ENCODE measurements at regions of chr12 and their contacts with region 1.

Region 1: DNA sequence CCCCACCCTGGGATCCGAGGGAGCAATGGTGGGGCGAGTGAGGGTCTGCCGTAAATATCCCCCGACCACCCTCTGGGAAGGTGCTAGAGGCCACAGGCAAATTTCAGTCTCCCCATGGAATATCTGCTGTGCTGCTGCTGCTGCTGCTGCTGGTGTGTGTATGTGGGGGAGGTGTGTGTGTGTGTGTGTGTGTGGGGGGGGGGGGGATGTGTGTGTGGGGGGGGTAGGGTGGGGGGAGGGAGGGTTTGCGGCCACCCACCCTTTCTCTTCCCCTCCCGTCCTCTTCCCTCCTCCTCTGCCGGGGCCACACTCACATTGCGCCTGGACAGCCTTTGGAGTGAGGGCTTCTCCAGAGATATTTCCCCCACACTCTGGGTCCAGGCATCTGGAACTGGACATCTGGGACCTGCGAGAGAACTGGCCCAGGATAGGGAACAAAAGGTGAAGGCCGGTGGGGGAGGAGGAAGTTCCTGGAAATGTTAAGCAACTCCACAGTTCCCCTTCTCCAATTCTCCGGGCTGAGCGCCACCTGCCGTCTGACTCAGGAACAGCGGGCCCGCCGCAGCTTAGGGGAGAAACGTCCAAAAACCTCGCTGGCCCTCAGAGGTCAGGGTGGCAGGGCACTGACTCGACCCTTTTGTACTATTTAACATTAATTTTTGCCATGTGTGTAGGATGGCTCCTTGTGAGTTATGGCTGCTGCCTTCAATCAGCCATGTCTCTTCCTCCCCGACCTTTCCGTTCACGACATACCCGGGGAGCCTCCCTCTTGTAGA is at the start of gene C1RL:
- DNase-seq: peak; percentile 87 to 91
- ATAC-seq: peak; percentile 90 to 91
- H3K4me3 ChIP-seq: peak within 1 kb of the TSS; percentile 55 to 70 (median 64)
- H3K27ac ChIP-seq: peak within 1 kb of the TSS; percentile 88 to 92 (median 89)
- H3K4me1 ChIP-seq: peaks cover 18% of the 10 kb centered on the region in 2 donors
- H3K27me3 ChIP-seq: no peaks in the 10 kb centered on the region
- CTCF ChIP-seq: peak; percentile 96 to 99 (median 97)
- POLR2A ChIP-seq: peak in 1 of 2 donors; percentile 5
- total RNA-seq, gene C1RL: 15.0 to 18.7 (median 16.7) TPM

Region 2: DNA sequence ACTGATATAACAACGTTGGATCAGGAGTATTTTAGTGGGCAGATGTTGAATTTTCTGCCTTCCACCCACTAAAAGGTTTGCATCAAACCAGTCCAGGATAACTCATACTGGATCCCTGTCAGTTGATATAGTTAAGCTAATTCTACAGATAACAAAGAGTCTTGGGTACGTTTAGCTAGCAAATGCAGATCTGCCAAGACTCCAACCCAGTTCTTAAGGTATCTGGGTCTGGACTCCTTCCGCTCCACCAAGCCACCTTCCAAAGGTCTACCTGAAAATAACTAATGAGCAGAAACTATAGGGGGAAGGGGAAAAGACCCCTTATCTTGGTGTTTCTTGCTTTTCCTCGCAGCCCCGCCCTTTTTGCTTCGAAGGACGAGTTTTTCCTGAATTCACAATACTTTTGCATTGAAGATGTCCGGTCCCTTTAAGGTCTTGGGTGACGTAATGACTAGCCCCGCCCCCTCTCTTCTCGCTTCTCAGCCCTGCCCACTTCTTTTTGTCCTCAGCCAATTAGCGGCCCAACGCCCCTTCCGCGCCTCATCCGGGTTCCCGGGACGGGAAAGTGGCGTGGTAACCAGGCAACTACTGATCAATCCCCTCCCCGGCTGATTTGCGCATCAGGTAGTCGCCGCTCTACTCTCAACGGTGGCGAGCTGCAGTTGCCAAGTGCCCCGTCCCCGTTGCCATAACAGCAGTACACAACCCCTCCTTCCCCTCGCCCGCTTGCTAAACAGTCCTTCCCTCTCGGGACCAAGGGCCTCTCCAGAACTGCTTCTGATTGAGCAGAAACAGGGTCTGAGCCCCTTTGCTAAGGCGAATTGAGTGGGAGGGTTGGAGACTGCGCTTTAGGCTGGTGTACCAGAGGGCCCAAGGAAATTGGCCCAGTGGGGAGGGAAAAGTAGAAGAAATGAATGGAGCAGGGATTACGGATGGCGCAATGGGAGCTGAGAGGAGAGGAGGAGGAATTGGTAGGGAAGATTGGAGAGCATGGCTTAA is 204.4 kb before region 1 on chr12 and contains the start of gene LRRC23:
- in situ Hi-C with region 1: loop called in 1 of 4 experiments (anchors 25 kb)
- intact Hi-C with region 1: no loop called
- DNase-seq: peak; percentile 91 to 94
- ATAC-seq: peak; percentile 98 to 99
- H3K4me3 ChIP-seq: peak within 1 kb of the TSS; percentile 67 to 91 (median 81)
- H3K27ac ChIP-seq: peak within 1 kb of the TSS; percentile 69 to 82 (median 78)
- H3K4me1 ChIP-seq: peaks cover 9 to 12% of the 10 kb centered on the region in 2 donors
- H3K27me3 ChIP-seq: no peaks in the 10 kb centered on the region
- CTCF ChIP-seq: no peak
- POLR2A ChIP-seq: peak in 1 of 2 donors; percentile 32
- total RNA-seq, gene LRRC23: 6.5 to 14.0 (median 11.0) TPM

Region 3: DNA sequence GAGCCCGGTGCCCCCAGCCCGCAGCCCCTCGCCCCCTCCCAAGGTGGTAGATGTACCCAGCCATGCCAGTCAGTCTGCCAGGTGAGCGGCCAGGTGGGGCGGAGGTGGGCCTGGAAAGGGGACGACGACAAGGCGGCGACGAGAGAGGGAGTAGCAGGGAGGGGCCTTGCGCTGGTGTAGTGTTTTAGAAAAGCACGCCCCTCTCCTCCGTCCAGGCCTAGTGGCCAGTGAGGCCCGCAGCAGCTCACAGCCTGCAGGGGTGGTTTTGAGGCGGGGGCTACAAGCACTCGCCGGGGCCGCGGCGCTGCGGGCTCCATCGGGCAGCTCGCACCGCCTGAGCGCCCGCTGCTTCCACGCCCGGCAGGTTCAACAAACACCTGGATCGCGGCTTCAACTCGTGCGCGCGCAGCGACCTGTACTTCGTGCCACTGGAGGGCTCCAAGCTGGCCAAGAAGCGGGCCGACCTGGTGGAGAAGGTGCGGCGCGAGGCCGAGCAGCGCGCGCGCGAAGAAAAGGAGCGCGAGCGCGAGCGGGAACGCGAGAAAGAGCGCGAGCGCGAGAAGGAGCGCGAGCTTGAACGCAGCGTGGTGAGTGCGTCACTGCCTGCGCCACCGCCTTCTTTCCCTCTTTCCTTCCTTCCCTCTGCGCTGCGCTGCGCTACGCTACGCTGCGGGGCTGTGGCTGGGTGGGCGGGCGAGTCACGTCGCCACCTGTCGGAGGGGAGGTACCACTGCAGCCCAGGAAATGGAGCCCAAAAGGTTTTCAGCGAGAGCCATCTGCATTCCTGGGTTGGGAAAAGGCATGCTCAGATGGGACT is 171.3 kb before region 1 on chr12:
- in situ Hi-C with region 1: loop called in 2 of 4 experiments (anchors 10 to 25 kb)
- intact Hi-C with region 1: no loop called
- DNase-seq: peak; percentile 91 to 93
- ATAC-seq: peak; percentile 91 to 94
- H3K4me3 ChIP-seq: peak overlapping the region; percentile 67 to 93 (median 80)
- H3K27ac ChIP-seq: peak overlapping the region; percentile 91 to 97 (median 95)
- H3K4me1 ChIP-seq: peaks cover 25 to 44% of the 10 kb centered on the region in 2 donors
- H3K27me3 ChIP-seq: no peaks in the 10 kb centered on the region
- CTCF ChIP-seq: peak; percentile 94 to 98 (median 95)
- POLR2A ChIP-seq: peak; percentile 64 to 69

Region 4: GRCh38 chr12:6965026-6965661 is 143.8 kb before region 1 on chr12:
- in situ Hi-C with region 1: no loop called
- intact Hi-C with region 1: loop called (anchors 5 kb)
- DNase-seq: peak; percentile 71 to 86
- ATAC-seq: peak; percentile 60 to 77
- H3K4me3 ChIP-seq: no peak overlapping the region
- H3K27ac ChIP-seq: peak overlapping the region; percentile 65 to 84 (median 72)
- H3K4me1 ChIP-seq: peaks cover 33 to 37% of the 10 kb centered on the region in 2 donors
- H3K27me3 ChIP-seq: no peaks in the 10 kb centered on the region
- CTCF ChIP-seq: peak; percentile 88 to 92 (median 89)
- POLR2A ChIP-seq: no peak

Region 5: DNA sequence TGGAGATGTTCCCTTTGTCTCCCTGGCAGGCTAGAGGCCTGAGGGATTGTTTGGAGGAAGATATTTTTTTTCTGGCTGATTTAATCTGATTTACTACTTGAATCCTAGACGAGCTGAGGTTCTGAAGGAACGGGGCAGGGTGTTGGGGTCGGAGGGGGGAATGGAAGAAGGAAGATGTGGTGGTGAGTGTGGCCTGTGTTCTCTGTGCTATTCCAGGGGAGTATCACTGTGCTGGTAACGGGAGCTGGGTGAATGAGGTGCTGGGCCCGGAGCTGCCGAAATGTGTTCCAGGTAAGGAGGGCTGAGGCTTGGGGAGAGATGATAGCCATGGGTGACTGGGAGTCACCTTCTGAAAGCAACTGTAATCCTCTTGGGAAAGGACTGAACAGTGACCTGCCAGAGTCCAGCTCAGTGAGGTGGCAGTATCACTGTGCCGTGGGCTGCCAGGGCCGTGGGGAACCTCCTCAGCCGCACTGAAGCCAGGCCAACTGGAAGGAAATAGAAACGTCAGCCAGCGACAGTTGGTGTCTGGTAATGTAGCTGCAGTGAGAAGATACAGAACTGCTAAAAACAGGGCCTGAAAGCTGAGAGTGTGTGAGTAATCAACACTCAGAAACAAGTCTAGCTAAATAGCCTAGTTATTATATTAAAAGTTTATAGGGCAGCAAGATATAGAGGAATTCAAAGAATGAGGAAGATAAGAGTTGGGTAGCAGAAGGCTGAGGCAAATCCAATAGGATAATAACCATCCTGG is 40.6 kb before region 1 on chr12:
- in situ Hi-C with region 1: loop called in 3 of 4 experiments (anchors 5 kb)
- intact Hi-C with region 1: loop called (anchors 2 kb)
- DNase-seq: peak; percentile 85 to 90
- ATAC-seq: peak; percentile 97 to 98
- H3K4me3 ChIP-seq: no peak overlapping the region
- H3K27ac ChIP-seq: peak overlapping the region; percentile 80 to 85 (median 83)
- H3K4me1 ChIP-seq: peaks cover 20 to 31% of the 10 kb centered on the region in 2 donors
- H3K27me3 ChIP-seq: no peaks in the 10 kb centered on the region
- CTCF ChIP-seq: no peak
- POLR2A ChIP-seq: no peak

Region 6: DNA sequence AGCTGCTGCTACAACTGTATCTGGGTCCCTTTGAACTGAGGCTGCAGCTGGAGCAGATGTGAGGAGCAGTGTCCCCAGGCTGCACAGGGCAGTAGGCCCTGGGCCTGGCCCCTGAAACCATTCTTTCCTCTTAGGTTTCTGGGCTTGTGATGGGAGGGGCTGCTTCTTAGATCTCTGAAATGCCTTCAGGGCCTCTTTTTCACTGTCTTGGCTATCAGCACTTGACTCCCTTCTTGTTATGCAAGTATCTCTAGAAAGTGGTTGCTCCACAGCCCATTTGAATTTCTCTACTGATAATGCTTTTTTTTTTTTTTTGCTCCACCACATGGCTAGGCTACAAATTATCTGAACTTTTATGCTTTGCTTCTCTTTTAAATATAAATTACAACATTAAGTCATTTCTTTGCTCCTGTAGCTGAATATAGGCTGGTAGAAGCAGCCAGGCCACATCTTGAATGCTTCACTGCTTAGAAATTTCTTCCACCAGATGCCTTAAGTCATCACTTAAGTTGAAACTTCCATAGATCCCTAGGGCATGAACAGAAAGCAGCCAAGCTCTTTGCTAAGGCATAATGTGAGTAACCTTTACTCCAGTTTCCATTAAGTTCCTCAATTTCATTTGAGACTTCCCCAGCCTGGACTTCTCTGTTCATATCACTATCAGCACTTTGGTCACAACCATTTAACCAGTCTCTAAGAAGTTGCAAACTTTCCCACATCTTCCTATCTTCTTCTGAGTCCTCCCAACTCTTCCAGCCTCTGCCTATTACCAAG is 236.0 kb after region 1 on chr12:
- in situ Hi-C with region 1: no loop called
- intact Hi-C with region 1: no loop called
- DNase-seq: no peak
- ATAC-seq: no peak
- H3K4me3 ChIP-seq: no peak overlapping the region
- H3K27ac ChIP-seq: no peak overlapping the region
- H3K4me1 ChIP-seq: no peaks in the 10 kb centered on the region
- H3K27me3 ChIP-seq: no peaks in the 10 kb centered on the region
- CTCF ChIP-seq: no peak
- POLR2A ChIP-seq: no peak

Measured in gastrocnemius medialis (tissue), 4 donors.